Heart right ventricle (tissue), 16 donors: ENCODE measurements at regions of chr14 and their contacts with region 1.

Region 1: DNA sequence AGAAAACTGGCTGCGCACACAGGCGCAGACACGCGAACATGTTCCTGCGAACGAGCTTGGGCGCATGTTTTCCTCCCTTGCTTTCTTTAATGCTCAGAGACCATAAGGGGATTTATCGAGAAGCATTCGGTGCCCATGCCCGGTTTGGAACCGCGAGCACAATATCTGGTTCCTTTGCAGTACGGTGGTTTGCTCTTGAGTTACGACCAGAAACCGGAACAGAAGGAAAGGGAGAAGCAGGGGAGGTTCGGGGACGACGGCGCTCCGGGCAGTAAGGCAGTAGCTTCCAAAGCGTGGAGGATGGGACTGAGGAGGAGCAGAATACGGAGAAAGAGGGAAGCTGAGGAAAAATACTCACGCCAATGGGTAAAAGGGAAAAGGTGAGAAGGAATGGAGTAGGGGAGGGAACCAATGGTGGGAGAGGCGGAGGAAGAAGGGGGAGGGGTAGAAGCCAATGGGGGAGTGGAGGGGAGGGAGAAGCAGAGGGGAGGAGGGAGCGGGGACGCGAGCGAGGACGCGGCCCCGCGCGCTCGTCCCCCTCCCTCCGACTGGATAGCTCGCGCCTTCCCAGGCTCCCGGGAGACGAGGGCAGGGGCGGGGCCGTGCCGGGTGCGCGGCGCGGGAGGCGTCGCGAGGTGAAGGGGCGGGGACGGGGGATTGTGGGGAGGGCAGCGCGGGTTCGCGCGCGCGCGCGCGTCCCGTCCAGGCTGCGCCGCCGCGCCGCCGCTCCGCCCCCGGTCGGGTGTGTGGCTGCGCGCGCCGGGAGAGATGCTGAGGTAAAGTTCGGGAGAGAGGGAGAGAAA is 625 bp upstream of the ARHGAP5 start:
- DNase-seq: peak; percentile 96 to 98
- ATAC-seq: peak; percentile 94 to 97 (median 96)
- H3K4me3 ChIP-seq: peak overlapping the region; percentile 90 to 98 (median 95)
- H3K27ac ChIP-seq: peak overlapping the region; percentile 93 to 99 (median 98)
- H3K4me1 ChIP-seq: peaks cover 0 to 60% (median 45%) of the 10 kb centered on the region in 9 donors
- H3K27me3 ChIP-seq: no peaks in the 10 kb centered on the region
- CTCF ChIP-seq: no peak

Region 2: GRCh38 chr14:31510222-31510621 is 566.3 kb before region 1 on chr14:
- intact Hi-C with region 1: loop called in 1 of 10 experiments (anchors 10 kb)
- DNase-seq: no peak
- ATAC-seq: no peak
- H3K4me3 ChIP-seq: no peak overlapping the region
- H3K27ac ChIP-seq: no peak overlapping the region
- H3K4me1 ChIP-seq: peaks cover 4 to 16% (median 11%) of the 10 kb centered on the region in 9 donors
- H3K27me3 ChIP-seq: no peaks in the 10 kb centered on the region
- CTCF ChIP-seq: peak; percentile 48 to 85 (median 71)

Region 3: DNA sequence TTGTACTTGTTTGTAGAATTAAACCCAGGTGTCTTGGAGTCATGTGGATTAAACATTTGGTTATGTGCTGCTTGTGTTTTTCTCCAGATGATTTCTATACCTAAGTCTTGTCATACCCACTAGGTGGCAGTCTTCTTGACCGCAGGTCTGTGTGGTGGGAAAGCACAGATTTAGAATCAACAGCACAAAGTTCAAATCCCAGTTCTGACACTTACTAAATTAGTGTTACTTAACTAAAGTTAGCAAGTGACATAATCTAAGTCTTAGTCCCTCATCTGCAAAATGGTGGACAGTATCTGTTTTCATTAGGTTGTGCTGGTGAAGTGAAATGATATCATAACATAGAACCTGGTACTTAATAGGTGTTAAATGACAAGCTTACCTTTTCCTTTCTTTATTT is 150.4 kb before region 1 on chr14:
- intact Hi-C with region 1: loop called in 4 of 10 experiments (anchors 5 to 10 kb)
- DNase-seq: no peak
- ATAC-seq: no peak
- H3K4me3 ChIP-seq: no peak overlapping the region
- H3K27ac ChIP-seq: peak overlapping the region; percentile 70 to 92 (median 84)
- H3K4me1 ChIP-seq: peaks cover 5 to 49% (median 36%) of the 10 kb centered on the region in 9 donors
- H3K27me3 ChIP-seq: no peaks in the 10 kb centered on the region
- CTCF ChIP-seq: peak in 8 of 9 donors; percentile 32 to 63 (median 48)

Region 4: GRCh38 chr14:31945074-31945613 is 131.3 kb before region 1 on chr14:
- intact Hi-C with region 1: loop called in 1 of 10 experiments (anchors 10 kb)
- DNase-seq: no peak
- ATAC-seq: peak in 6 of 8 donors; percentile 19 to 33 (median 26)
- H3K4me3 ChIP-seq: no peak overlapping the region
- H3K27ac ChIP-seq: no peak overlapping the region
- H3K4me1 ChIP-seq: peaks cover 0 to 33% (median 6%) of the 10 kb centered on the region in 9 donors
- H3K27me3 ChIP-seq: no peaks in the 10 kb centered on the region
- CTCF ChIP-seq: no peak

Region 5: DNA sequence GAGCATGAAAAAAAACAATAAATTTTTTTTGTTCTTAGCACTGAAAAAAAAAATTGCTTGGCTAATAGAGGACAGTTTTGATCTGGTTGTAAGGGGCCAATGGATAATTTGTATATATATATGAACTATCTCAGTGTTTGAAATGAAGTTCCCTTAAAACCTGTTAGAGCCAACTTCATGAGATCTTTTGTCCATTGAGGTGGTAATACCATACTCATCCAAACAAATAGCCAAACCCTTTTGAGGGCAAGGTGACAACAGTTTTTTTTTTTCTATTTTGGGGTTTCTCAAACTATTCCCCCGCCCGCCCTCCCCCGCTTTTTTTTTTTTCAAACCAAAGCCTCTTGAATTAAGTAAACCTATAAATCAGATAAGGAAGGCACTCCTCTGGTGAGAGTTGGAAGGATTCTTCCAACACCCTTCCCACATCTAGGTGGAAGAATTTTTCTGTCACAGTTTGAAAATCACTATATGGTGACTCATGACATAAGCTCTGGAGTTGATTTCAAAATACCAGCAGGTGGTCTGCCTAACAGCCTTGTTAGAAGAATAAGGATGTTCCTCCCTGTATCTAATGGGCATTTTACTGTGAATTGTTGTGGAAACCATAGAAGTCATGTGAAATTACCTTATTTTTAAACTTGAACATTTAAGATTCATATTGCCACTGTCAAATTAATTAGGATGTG is 10.8 kb after region 1 on chr14:
- intact Hi-C with region 1: no loop called
- DNase-seq: no peak
- ATAC-seq: no peak
- H3K4me3 ChIP-seq: no peak overlapping the region
- H3K27ac ChIP-seq: no peak overlapping the region
- H3K4me1 ChIP-seq: peaks cover 0 to 68% (median 27%) of the 10 kb centered on the region in 9 donors
- H3K27me3 ChIP-seq: no peaks in the 10 kb centered on the region
- CTCF ChIP-seq: no peak

Region 6: DNA sequence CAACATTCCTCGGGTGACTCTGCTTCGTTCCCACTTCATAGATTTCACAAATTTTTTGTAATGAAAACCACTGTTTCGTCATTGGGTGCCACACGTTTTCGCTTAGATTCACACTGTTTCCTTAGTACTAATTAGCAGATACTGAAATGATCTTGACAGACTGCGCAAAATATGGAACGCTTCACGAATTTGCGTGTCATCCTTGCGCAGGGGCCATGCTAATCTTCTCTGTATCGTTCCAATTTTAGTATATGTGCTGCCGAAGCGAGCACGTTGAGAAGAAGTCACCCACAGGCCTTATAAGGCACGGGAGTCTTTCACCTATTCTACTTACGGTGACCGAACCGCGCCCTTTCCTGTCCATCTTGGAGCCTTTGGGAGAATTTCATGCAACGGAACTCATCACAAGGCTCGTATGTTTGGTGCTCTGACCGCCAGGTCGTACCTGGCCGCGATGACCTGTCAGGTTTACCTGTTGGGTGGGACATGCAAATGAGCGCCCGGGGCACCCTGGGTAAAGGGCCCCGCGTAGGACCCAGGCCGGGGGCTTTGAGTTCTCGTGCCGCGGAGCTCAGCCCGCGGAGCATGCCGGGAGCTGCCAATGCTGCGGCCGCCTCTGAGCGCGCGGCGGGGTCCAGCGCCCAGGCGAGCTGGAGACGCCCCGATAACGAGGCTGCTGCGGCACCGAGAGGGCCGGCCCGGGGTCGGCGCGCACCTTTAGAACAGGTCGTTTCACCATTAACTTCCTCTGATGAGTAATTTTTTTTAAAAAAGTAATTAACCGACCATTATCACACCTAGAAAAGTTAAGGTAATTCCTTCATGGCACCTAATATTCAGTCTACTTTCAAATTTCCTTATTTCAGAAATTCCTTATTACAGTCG is 126.8 kb after region 1 on chr14 and contains the start of gene RNU6-8:
- intact Hi-C with region 1: loop called in 6 of 10 experiments (anchors 1 to 5 kb)
- DNase-seq: peak; percentile 83 to 88
- ATAC-seq: peak; percentile 90 to 95 (median 93)
- H3K4me3 ChIP-seq: peak within 1 kb of the TSS; percentile 36 to 77 (median 66)
- H3K27ac ChIP-seq: peak within 1 kb of the TSS; percentile 64 to 94 (median 90)
- H3K4me1 ChIP-seq: peaks cover 0 to 42% (median 15%) of the 10 kb centered on the region in 9 donors
- H3K27me3 ChIP-seq: peaks cover 0 to 29% (median 0%) of the 10 kb centered on the region in 7 donors
- CTCF ChIP-seq: peak in 1 of 9 donors; percentile 12
- total RNA-seq, gene RNU6-8: not detected

Region 7: GRCh38 chr14:32469388-32470160 is 393.1 kb after region 1 on chr14:
- intact Hi-C with region 1: loop called in 4 of 10 experiments (anchors 5 to 10 kb)
- DNase-seq: no peak
- ATAC-seq: peak in 3 of 8 donors; percentile 29 to 56 (median 52)
- H3K4me3 ChIP-seq: no peak overlapping the region
- H3K27ac ChIP-seq: peak overlapping the region in 8 of 10 donors; percentile 2 to 87 (median 66)
- H3K4me1 ChIP-seq: peaks cover 6 to 64% (median 38%) of the 10 kb centered on the region in 9 donors
- H3K27me3 ChIP-seq: no peaks in the 10 kb centered on the region
- CTCF ChIP-seq: peak in 8 of 9 donors; percentile 27 to 71 (median 63)